ENCODE measurements at regions of chr9 and their contacts with region 1.

Region 1: GRCh38 chr9:35732122-35732799 is at the starts of genes CREB3 and TLN1:
- DNase-seq: peak; percentile 100
- H3K4me3 ChIP-seq: peak within 1 kb of the TSS; percentile 80 to 86 (median 82)
- H3K27ac ChIP-seq: peak within 1 kb of the TSS; percentile 97 to 99 (median 98)
- H3K4me1 ChIP-seq: peaks cover 0 to 64% (median 54%) of the 10 kb centered on the region in 4 donors
- H3K27me3 ChIP-seq: no peaks in the 10 kb centered on the region
- CTCF ChIP-seq: no peak
- EP300 ChIP-seq: peak in 2 of 4 donors; percentile 4 to 77
- POLR2A ChIP-seq: peak; percentile 73 to 91
- total RNA-seq, gene CREB3: 65.9 to 82.7 (median 75.4) TPM
- total RNA-seq, gene TLN1: 354 to 609 (median 525) TPM

Region 2: GRCh38 chr9:35395076-35395705 is 337.1 kb before region 1 on chr9:
- intact Hi-C with region 1: no loop called
- DNase-seq: no peak
- H3K4me3 ChIP-seq: no peak overlapping the region
- H3K27ac ChIP-seq: no peak overlapping the region
- H3K4me1 ChIP-seq: no peaks in the 10 kb centered on the region
- H3K27me3 ChIP-seq: no peaks in the 10 kb centered on the region
- CTCF ChIP-seq: no peak
- EP300 ChIP-seq: no peak
- POLR2A ChIP-seq: no peak

Region 3: DNA sequence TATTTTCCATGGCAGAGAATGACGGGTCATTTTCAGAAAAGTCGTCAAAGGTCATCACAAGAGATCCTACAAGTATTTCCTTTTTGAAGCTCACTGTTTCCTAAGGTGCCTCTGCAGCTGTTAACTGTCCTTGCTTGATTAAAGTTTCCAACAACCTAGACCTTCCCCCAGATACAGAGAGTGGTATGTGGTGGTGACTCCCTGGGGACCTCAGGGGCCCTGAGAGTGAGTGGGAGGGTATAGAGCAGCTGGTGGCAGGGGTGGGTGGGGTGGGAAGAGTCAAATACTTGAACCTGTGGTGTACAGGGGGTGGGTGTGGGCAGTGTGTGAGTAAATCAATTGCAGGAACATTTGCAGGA is 112.5 kb before region 1 on chr9:
- intact Hi-C with region 1: no loop called
- DNase-seq: no peak
- H3K4me3 ChIP-seq: no peak overlapping the region
- H3K27ac ChIP-seq: no peak overlapping the region
- H3K4me1 ChIP-seq: peaks cover 0 to 13% (median 10%) of the 10 kb centered on the region in 4 donors
- H3K27me3 ChIP-seq: peaks cover 0 to 7% (median 0%) of the 10 kb centered on the region in 3 donors
- CTCF ChIP-seq: no peak
- EP300 ChIP-seq: no peak
- POLR2A ChIP-seq: no peak

Region 4: GRCh38 chr9:35690431-35691333 is 41.6 kb before region 1 on chr9:
- intact Hi-C with region 1: loop called (anchors 1 kb)
- DNase-seq: peak; percentile 97
- H3K4me3 ChIP-seq: peak overlapping the region; percentile 88 to 97 (median 94)
- H3K27ac ChIP-seq: peak overlapping the region; percentile 95 to 100 (median 98)
- H3K4me1 ChIP-seq: peaks cover 0 to 46% (median 22%) of the 10 kb centered on the region in 4 donors
- H3K27me3 ChIP-seq: no peaks in the 10 kb centered on the region
- CTCF ChIP-seq: no peak
- EP300 ChIP-seq: peak in 1 of 4 donors; percentile 38
- POLR2A ChIP-seq: peak; percentile 53 to 65